Head of caudate nucleus (tissue), 42 donors: ENCODE measurements at regions of chr22 and their contacts with region 1.

Region 1: DNA sequence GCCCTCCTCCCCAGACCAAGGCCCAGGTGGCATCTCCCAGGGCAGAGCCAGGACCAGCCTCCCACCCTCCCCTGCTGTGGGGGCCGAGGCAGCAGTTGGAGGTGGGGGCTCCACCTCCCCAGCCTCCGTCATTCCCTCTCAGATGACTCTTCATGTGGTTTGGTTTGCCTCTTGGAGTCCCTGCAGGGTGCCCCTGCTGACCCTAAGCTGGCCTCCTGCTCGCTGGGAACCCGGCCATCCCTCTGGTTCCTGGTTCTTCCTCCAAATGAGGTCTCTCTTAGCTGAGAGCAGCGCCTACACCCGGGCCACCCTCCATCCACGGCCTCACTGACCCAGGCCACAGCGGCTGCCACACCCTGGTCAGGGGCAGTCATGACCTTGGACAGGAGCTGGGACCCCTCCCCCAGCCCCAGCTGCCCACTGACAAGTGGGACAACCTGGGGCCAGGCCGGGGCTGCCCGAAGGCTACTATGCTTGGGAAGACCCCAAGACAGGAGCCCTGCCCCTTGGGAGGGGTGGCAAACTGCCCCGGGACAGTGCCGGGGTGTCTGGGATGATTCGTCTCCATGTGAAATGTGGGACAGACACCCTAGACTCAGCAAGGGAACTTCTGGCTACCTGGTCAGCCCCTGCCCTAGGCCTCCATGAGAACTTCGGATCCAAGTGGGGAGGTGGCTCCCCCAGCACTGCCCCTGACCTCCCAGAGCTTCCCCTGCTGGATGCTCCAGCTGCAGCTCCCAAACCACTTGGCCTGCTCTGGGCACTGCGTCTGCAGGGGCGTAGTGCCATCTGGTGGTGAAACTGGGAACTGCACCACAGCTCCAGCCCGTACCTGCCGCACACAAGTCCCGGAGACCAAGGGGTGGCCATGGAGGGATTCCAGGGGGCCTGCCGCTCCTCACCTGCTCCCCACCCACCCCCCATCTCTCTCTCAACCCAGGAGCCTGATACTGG is 194.5 kb downstream of the IGLL1 start:
- DNase-seq: peak; percentile 56 to 96 (median 89)

Region 2: DNA sequence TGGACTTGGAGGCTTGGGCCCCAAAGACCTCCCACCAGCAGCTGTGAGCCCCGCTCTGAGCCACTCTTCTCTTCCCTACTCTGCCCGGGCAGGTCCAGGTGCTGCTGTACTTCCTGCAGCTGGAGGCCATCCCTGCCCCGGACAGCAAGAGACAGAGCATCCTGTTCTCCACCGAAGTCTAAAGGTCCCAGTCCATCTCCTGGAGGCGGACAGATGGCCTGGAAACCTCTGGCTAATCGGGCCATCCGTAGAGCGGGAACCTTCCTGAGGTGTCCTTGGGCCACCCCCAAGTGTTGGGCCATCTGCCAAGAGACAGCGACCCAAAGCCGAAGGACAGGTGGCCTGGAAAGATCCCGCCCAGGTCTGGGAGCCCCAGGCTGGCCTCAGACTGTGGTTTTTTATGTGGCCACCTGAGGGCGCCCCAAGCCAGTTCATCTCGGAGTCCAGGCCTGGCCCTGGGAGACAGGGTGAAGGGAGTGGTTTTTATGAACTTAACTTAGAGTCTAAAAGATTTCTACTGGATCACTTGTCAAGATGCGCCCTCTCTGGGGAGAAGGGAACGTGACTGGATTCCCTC is 70.1 kb before region 1 on chr22:
- intact Hi-C with region 1: loop called (anchors 5 kb)
- DNase-seq: peak; percentile 34 to 86 (median 68)

Region 3: DNA sequence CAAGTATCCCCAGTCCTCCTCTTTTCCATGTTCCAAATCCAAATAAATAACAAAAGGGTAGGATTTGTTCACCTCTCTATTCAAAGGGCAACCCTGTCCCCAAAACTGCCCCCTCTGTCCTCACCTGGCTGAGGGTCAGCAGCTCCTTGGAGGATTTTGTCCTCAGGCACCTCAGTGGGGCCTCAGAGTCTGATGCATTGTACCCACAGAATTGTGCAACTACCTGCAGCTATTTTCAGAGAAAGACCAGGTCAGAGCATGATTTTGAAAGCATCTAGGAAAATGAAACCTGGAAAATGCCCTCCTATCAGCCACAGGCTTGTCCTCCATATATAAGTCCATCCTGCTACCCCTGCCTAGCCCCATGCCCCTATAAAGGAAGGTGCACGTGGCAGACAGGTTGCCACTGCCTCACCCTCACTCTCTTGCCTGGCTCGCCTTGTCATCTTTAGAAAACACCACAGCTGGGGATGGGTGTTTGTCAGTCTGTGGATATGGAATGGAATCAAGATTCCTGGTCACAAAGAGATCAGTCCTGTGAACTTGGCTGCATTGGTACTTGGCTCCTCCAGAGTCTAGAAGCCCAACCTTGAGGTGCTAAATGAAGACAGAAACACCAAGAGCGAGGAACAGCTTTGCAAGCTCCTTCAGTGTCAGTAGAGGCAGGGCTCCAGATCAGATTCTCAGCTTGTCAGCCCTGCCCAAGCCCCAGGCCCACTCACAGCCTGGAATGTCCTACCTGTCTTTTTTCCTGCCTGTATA is 16.7 kb before region 1 on chr22:
- intact Hi-C with region 1: no loop called
- DNase-seq: peak in 2 of 42 donors; percentile 3 to 14